Activated CD8-positive, alpha-beta T cell treated with anti-CD3 and anti-CD28 coated beads, Interleukin-2, amount 10 ng/mL, durations not matched to agents 7 days and 5 days (primary cell): ENCODE measurements at regions of chr18 and their contacts with region 1.

Region 1: DNA sequence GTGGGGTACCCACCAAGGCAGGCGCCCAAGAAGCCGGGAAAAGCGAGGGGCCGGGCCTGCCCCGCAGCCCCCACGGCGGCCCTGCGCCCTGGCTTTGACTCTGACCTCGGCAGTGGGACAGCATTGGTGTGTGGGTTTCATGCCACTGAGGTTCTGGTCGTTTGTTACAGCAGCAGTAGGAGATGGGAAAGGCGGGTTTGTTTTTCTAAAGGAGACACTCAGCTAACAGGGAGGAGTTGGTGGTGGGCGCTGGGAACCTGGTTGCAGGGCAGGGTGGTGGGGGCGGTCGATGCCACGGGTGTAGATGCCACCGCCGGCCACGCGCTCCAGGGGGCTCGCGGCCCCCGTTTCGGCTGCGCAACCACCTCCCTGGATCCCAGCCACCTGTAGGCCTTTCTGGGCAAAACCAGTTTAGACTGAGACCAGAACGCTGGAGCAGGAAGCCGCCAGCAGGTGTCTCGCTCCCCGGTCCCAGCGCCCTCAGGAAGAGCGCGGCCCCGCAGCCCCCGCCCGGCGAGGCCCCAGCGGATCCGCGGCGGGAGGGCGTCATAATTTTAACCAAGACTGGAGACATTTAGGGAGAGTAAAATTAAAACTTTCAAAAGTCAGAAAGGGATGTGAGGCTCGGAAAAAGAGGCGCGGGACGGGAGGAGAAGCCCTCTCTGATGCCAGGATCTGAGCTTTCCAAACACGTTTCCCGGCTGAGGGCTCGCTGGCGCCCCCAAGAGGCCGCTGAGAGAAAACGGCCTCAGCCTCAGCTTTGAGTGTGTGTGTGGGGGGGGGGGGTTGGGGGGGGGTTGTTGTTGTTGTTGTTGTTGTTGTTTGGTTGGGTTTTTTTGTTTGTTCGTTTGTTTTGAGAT is 17.4 kb downstream of the CIDEA start:
- DNase-seq: peak; percentile 61
- ATAC-seq: peak; percentile 94
- H3K4me3 Mint-ChIP-seq: peak overlapping the region; percentile 51
- H3K27ac Mint-ChIP-seq: no peak overlapping the region
- H3K4me1 Mint-ChIP-seq: no peaks in the 10 kb centered on the region
- H3K27me3 Mint-ChIP-seq: no peaks in the 10 kb centered on the region

Region 2: GRCh38 chr18:12287684-12288402 is 16.2 kb after region 1 on chr18:
- CTCF ChIA-PET with region 1: interaction called, 17 read pairs
- POLR2A ChIA-PET with region 1: no interaction called
- DNase-seq: no peak
- ATAC-seq: no peak
- H3K4me3 Mint-ChIP-seq: no peak overlapping the region
- H3K27ac Mint-ChIP-seq: no peak overlapping the region
- H3K4me1 Mint-ChIP-seq: peaks cover 4% of the 10 kb centered on the region
- H3K27me3 Mint-ChIP-seq: peaks cover 32% of the 10 kb centered on the region